Mucosa of descending colon (tissue), 3 donors: ENCODE measurements at regions of chr10 and their contacts with region 1.

Region 1: DNA sequence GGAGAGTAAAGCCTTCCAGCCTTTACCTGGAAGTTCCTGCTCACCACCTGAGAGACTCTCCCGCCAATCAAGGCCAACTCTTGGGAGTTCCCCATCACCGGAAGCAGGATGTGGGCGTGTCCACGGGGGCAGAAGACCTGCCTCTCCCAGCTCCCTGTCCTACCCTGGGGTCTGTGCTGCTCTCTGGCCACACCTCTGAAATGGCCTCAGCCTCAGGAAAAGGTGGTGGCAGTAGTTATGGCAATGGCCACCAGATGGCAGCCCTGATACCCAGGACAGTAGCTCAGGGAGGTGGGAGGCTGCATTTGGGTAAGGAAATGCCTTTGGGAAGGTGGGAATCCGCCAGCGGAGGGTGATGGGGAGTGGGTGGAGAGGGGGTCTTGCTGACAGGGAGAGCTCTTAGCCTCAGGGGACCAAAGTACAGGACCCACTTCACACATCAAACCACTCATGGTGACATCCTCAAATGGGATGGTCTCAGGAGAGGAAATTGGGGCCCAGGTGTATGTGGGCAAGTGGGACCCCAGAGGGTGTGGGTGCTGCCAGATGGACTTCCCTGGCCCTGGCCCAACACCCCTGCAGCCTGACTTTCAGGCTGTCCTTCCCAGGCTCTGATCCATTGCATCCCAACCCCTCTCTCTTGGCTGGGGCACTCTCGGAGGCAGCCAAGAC is 33.9 kb downstream of the KAZALD1 start:
- DNase-seq: peak; percentile 89 to 93 (median 91)
- ATAC-seq: peak; percentile 98
- H3K4me3 ChIP-seq: no peak overlapping the region
- H3K4me1 ChIP-seq: no peaks in the 10 kb centered on the region
- CTCF ChIP-seq: peak; percentile 65

Region 2: DNA sequence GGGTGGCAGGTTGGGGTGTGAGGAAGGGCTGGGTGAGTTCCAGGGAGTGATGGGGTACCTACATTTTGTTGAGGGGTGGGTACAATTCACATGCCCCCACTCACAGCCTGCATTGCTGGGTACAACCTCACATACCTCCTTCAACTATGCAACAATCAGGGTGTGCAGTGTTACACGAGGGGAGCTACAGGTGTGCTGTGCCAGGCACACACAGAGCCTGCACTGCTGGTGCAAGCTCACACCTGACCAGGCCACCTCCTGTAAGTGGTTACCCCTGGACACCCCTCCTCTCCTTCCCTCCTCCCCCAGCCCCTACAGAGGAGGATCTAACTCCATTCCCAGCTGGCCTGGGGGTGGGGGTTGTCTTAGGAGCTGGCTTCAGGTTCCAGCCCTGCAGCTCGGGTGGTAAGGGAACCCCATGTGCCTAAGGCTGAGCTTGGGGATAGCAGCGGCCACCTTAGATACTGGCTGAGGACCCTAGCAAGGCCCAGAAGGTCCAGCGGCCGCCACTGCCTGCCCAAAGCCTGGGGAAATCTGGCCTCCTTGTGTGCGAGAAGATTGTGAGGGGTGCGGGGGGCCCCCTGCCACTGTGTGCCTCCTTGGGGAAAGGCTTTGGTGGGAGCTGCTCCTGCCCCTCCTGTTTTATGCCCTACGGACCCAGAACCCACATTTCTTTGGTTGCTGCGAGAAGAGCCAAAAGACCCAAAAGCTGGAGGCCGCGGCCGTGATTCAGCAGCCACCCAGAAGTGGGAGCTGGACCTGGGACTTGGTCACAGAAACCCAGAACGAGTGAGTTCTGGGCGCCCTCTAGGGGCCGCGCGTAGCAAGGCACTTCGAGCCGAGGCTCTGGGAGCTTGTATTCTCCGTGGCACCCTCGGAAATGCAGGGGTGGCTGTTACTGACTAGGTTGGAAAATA is 46.2 kb after region 1 on chr10:
- intact Hi-C with region 1: loop called (anchors 2 to 10 kb)
- DNase-seq: peak; percentile 73 to 90 (median 89)
- ATAC-seq: peak; percentile 94
- H3K4me3 ChIP-seq: no peak overlapping the region
- H3K4me1 ChIP-seq: no peaks in the 10 kb centered on the region
- CTCF ChIP-seq: peak; percentile 99